Transverse colon (tissue), 4 donors: ENCODE measurements at regions of chr3 and their contacts with region 1.

Region 1: GRCh38 chr3:156554842-156555687 is at the start of gene SSR3:
- DNase-seq: peak; percentile 99
- H3K4me3 ChIP-seq: peak within 1 kb of the TSS; percentile 69 to 95 (median 76)
- H3K27ac ChIP-seq: peak within 1 kb of the TSS; percentile 89 to 97 (median 90)
- H3K4me1 ChIP-seq: peaks cover 8 to 43% (median 25%) of the 10 kb centered on the region in 4 donors
- H3K27me3 ChIP-seq: no peaks in the 10 kb centered on the region
- CTCF ChIP-seq: peak; percentile 37 to 92 (median 45)
- EP300 ChIP-seq: no peak
- POLR2A ChIP-seq: peak; percentile 91
- total RNA-seq, gene SSR3: 21.7 to 68.8 (median 50.1) TPM

Region 2: DNA sequence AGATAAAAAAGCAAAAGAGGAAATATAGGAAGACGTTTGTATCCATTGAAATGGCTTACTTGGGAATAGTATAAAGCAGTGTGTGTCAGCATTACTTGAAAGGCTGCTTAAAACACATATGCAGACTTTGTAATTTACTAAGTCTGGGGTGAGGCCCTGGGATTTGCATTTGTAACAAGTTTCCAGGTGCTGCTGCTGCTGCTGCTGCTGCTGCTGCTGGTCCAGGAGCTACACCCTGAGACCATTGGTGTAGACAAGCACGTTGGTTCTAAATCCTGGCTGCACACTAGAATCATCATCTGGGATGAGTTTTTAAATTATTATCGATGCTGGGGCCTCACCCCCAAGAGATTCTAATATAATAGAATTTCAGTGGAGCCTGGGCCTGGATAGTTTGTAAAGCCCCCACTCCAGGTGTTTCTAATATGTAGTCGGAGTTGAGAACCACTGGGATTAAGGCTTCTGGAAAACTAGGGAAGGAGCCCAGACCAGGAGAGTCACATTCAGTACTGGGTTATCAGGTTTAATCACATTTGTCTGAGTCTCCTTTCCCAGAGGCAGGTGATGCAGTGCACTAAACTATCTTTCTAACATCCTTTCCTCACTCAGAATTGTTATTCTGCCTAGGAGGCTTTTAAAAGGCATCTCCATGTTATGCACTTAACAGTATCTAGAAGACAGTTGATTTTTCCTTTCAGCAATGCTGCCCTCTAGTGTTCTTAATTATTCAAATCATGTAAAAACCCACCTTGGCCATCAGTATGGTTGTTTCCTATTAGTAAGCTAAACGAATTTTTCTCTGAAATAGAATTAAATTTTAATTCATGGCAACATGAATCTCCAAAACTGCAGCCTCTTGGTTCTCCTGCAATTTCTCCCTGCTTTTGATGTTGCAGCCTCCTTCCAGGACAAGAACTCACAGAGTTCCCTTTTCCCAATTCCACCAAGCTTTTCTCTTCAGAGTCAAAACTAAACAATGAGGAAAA is 45.6 kb before region 1 on chr3:
- in situ Hi-C with region 1: no loop called
- intact Hi-C with region 1: no loop called
- DNase-seq: no peak
- H3K4me3 ChIP-seq: no peak overlapping the region
- H3K27ac ChIP-seq: no peak overlapping the region
- H3K4me1 ChIP-seq: peaks cover 0 to 5% (median 0%) of the 10 kb centered on the region in 4 donors
- H3K27me3 ChIP-seq: no peaks in the 10 kb centered on the region
- CTCF ChIP-seq: peak; percentile 56 to 71 (median 67)
- EP300 ChIP-seq: no peak
- POLR2A ChIP-seq: no peak

Region 3: DNA sequence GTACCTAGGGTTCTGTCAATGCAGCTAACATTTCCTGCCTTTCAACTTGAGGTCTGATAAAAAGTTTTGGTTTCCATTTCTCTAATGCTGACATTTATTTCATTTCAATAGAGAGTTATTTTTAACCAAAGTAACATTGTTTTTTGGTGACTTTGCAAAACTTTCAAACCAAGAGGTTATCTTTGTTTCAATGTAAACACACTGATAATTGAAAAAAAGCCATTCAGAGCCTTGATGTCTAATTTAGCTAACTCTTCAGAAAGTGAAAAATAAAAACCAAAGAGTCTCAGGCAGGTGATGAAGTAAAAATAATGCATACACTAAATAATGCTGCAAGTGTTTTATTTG is 109.7 kb after region 1 on chr3:
- in situ Hi-C with region 1: loop called (anchors 10 to 25 kb)
- intact Hi-C with region 1: no loop called
- DNase-seq: no peak
- H3K4me3 ChIP-seq: no peak overlapping the region
- H3K27ac ChIP-seq: peak overlapping the region in 3 of 4 donors; percentile 4 to 10 (median 10)
- H3K4me1 ChIP-seq: peaks cover 0 to 45% (median 16%) of the 10 kb centered on the region in 4 donors
- H3K27me3 ChIP-seq: no peaks in the 10 kb centered on the region
- CTCF ChIP-seq: no peak
- EP300 ChIP-seq: no peak
- POLR2A ChIP-seq: no peak

Region 4: GRCh38 chr3:156718622-156719497 is 163.8 kb after region 1 on chr3:
- in situ Hi-C with region 1: no loop called
- intact Hi-C with region 1: no loop called
- DNase-seq: no peak
- H3K4me3 ChIP-seq: no peak overlapping the region
- H3K27ac ChIP-seq: no peak overlapping the region
- H3K4me1 ChIP-seq: no peaks in the 10 kb centered on the region
- H3K27me3 ChIP-seq: no peaks in the 10 kb centered on the region
- CTCF ChIP-seq: no peak
- EP300 ChIP-seq: no peak
- POLR2A ChIP-seq: no peak

Region 5: GRCh38 chr3:156816800-156817645 is 262.0 kb after region 1 on chr3:
- in situ Hi-C with region 1: loop called in 2 of 4 experiments (anchors 25 kb)
- intact Hi-C with region 1: no loop called
- DNase-seq: peak; percentile 91
- H3K4me3 ChIP-seq: peak overlapping the region; percentile 35 to 65 (median 56)
- H3K27ac ChIP-seq: peak overlapping the region; percentile 84 to 91 (median 88)
- H3K4me1 ChIP-seq: peaks cover 9 to 38% (median 22%) of the 10 kb centered on the region in 4 donors
- H3K27me3 ChIP-seq: no peaks in the 10 kb centered on the region
- CTCF ChIP-seq: peak in 2 of 5 experiments; percentile 10 to 15
- EP300 ChIP-seq: peak; percentile 89
- POLR2A ChIP-seq: peak; percentile 79

Region 6: DNA sequence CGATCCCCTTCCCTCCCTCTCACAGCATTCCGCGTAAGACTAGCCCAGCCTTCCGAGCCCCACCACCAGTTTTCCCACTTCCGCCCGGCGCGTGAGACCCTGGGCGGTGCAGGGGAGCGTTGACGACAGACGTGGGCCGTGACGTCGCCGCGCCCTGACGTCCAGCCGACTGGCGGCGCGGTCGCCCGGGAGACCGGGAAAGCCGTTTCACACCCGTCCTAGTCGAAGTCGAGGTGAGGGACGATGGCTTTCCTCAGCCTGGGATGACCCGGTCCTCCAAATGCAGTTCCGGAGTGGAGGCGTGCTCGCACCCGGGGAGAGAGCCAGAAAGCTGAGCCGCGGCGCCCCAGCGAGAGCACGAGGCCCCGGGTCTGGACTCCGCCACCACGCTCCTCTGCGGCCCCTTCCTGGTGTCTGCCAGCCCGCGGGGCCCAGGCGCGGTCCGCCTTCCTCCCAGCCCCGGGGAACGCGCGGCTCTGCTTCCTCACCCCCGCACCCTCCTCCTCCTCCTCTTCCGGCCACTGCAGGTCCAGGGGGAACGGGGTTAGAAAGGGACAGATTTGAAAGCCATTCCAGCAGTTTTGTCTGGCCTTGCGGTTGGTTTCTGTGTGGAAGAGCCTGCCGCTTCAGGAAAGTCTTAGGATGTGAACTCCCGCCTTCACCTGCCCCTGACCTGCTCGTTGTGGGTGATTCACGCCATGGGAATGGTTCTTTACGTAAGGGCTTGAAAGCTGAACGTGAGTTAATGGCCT is 271.3 kb after region 1 on chr3 and contains the start of gene LEKR1:
- in situ Hi-C with region 1: loop called in 3 of 4 experiments (anchors 25 kb)
- intact Hi-C with region 1: no loop called
- DNase-seq: peak; percentile 92
- H3K4me3 ChIP-seq: peak within 1 kb of the TSS; percentile 55 to 74 (median 56)
- H3K27ac ChIP-seq: peak within 1 kb of the TSS; percentile 90 to 97 (median 92)
- H3K4me1 ChIP-seq: peaks cover 6 to 16% (median 10%) of the 10 kb centered on the region in 4 donors
- H3K27me3 ChIP-seq: no peaks in the 10 kb centered on the region
- CTCF ChIP-seq: peak in 1 of 5 experiments; percentile 12
- EP300 ChIP-seq: no peak
- POLR2A ChIP-seq: peak; percentile 87
- total RNA-seq, gene LEKR1: 0.40 to 3.3 (median 0.96) TPM in 3 of 4 donors, not detected in the other